SK-N-SH (cell line): ENCODE measurements at regions of chr16 and their contacts with region 1.

Region 1: GRCh38 chr16:2500918-2501750 is 12.6 kb upstream of the ATP6V0C start:
- DNase-seq: peak; percentile 95
- H3K4me3 ChIP-seq: peak overlapping the region; percentile 27 to 34; a peak in 2 of 4 replicates
- H3K27ac ChIP-seq: peak overlapping the region in 1 of 2 experiments; percentile 50; a peak in 1 of 4 replicates
- H3K4me1 ChIP-seq: peaks cover 0 to 27% of the 10 kb centered on the region in 2 experiments; a peak in 1 of 4 replicates
- H3K27me3 ChIP-seq: no peaks in the 10 kb centered on the region
- CTCF ChIP-seq: peak; percentile 96
- EP300 ChIP-seq: no peak
- RAD21 ChIP-seq: peak; percentile 96

Region 2: GRCh38 chr16:2317231-2318020 is 183.7 kb before region 1 on chr16:
- CTCF ChIA-PET with region 1: no interaction called
- POLR2A ChIA-PET with region 1: no interaction called
- DNase-seq: no peak
- H3K4me3 ChIP-seq: no peak overlapping the region
- H3K27ac ChIP-seq: no peak overlapping the region
- H3K4me1 ChIP-seq: no peaks in the 10 kb centered on the region; a peak in 1 of 4 replicates
- H3K27me3 ChIP-seq: no peaks in the 10 kb centered on the region
- CTCF ChIP-seq: no peak
- EP300 ChIP-seq: no peak
- RAD21 ChIP-seq: no peak

Region 3: GRCh38 chr16:2340564-2341455 is 160.3 kb before region 1 on chr16 and contains the start of gene ABCA3:
- CTCF ChIA-PET with region 1: interaction called, 18 read pairs
- POLR2A ChIA-PET with region 1: no interaction called
- DNase-seq: peak; percentile 100
- H3K4me3 ChIP-seq: peak within 1 kb of the TSS; percentile 76 to 82
- H3K27ac ChIP-seq: peak within 1 kb of the TSS in 1 of 2 experiments; percentile 80; a peak in 2 of 4 replicates
- H3K4me1 ChIP-seq: peaks cover 0 to 20% of the 10 kb centered on the region in 2 experiments; a peak in 2 of 4 replicates
- H3K27me3 ChIP-seq: no peaks in the 10 kb centered on the region
- CTCF ChIP-seq: peak; percentile 96
- EP300 ChIP-seq: no peak
- RAD21 ChIP-seq: peak; percentile 81
- polyA plus RNA-seq, gene ABCA3: 6.9 and 9.9 TPM in 2 replicates

Region 4: GRCh38 chr16:2459647-2460390 is 41.3 kb before region 1 on chr16 and contains the start of gene TEDC2:
- CTCF ChIA-PET with region 1: interaction called, 27 read pairs
- POLR2A ChIA-PET with region 1: interaction called, 4 read pairs
- DNase-seq: peak; percentile 99
- H3K4me3 ChIP-seq: peak within 1 kb of the TSS; percentile 66 to 71
- H3K27ac ChIP-seq: peak within 1 kb of the TSS; percentile 39 to 76; a peak in 3 of 4 replicates
- H3K4me1 ChIP-seq: peaks cover 9 to 24% of the 10 kb centered on the region in 2 experiments; a peak in 2 of 4 replicates
- H3K27me3 ChIP-seq: no peaks in the 10 kb centered on the region
- CTCF ChIP-seq: no peak
- EP300 ChIP-seq: no peak
- RAD21 ChIP-seq: no peak
- polyA plus RNA-seq, gene TEDC2: 15.6 and 16.5 TPM in 2 replicates

Region 5: GRCh38 chr16:2474877-2475412 is 26.2 kb before region 1 on chr16 and contains the start of gene TBC1D24:
- CTCF ChIA-PET with region 1: interaction called, 32 read pairs
- POLR2A ChIA-PET with region 1: interaction called, 19 read pairs
- DNase-seq: peak; percentile 100
- H3K4me3 ChIP-seq: peak within 1 kb of the TSS; percentile 79 to 89
- H3K27ac ChIP-seq: peak within 1 kb of the TSS; percentile 38 to 89; a peak in 3 of 4 replicates
- H3K4me1 ChIP-seq: peaks cover 0 to 55% of the 10 kb centered on the region in 2 experiments; a peak in 3 of 4 replicates
- H3K27me3 ChIP-seq: no peaks in the 10 kb centered on the region
- CTCF ChIP-seq: no peak
- EP300 ChIP-seq: no peak
- RAD21 ChIP-seq: no peak
- polyA plus RNA-seq, gene TBC1D24: 5.6 and 6.7 TPM in 2 replicates

Region 6: DNA sequence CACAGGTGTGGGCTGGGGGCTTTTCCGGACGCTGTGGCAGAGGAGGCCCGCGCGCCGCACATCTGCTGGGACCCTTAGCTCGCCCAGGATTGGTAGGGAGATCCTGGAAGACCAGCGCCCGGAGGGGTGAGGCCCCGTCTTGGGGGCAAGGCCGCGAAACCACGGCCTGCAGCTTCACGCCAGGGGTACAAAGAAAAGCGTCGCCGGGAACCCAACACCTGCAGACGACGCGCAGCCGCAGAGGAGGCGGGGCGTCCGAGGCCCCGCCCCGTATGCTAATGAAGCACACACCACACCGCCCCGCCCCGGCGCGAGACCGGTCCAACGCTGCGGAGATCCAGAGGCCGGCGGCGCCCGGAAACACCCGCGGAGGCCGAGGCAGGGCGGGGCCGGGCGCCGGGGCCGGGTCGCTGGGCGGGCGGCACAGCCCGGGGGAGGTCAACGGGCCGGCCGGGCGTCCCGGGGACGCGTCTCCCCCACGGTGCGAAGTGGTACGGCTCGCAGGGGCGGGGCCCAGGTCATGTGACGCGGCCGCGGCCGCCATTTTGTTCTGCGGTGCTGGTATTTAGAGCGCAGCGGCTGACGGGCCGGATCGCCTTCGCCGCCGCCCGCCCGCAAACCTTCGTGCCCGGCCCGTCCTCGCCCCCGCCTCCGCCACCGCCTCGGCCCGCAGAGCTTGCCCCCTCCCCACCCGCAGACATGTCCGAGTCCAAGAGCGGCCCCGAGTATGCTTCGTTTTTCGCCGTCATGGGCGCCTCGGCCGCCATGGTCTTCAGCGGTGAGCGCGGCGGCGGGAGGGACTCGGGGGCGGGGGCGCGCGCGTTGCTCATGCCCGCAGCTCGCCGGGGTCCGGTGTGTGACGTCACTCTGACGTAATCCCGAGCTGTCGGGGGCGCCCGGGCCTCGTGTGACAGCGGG is 12.5 kb after region 1 on chr16 and contains the start of gene ATP6V0C:
- CTCF ChIA-PET with region 1: interaction called, 41 read pairs
- POLR2A ChIA-PET with region 1: no interaction called
- DNase-seq: peak; percentile 97
- H3K4me3 ChIP-seq: peak within 1 kb of the TSS; percentile 74 to 95
- H3K27ac ChIP-seq: peak within 1 kb of the TSS; percentile 73 to 90
- H3K4me1 ChIP-seq: peaks cover 15 to 25% of the 10 kb centered on the region in 2 experiments; a peak in 3 of 4 replicates
- H3K27me3 ChIP-seq: no peaks in the 10 kb centered on the region
- CTCF ChIP-seq: no peak
- EP300 ChIP-seq: no peak
- RAD21 ChIP-seq: no peak
- polyA plus RNA-seq, gene ATP6V0C: 30.2 and 80.1 TPM in 2 replicates

Region 7: DNA sequence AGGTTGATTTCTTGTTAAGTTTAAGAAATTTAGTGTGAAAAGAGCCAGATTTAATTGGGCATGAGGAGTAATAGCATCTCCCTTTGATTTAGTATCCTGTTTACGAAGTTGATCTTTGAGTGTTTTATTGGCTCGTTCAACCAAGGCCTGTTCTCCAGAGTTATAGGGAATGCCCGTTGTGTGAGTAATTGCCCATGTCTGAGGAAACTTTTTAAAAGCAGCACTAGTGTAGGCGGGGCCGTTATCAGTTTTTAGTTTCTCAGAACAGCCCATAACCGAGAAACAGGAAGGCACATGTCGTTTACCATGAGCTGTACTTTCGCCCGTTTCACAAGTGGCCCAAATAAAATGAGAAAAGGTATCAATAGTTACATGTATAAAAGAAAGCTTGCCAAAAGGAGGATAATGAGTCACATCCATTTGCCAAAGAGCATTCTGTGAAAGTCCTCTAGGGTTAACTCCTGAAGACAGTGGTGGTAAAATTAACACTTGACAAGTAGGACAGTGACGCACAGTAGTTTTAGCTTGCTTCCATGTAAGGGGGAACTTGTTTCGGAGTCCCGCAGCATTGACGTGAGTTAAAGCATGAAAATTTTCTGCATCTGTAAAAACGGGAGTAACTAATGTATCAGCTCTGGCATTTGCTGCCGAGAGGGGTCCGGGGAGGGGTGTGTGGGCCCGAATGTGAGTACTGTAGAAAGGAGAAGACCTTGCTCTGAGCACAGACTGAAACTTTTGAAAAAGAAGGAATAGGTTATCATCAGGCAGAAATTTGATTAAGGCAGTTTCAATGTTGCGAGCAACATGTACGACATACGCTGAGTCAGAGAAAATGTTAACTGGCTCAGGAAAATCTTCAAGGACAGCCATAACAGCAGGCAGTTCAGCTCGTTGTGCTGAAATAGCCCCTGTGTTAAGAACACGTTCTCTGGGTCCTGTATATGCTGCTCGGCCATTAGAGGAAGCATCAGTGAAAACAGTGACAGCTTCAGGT is 162.7 kb after region 1 on chr16:
- CTCF ChIA-PET with region 1: no interaction called
- POLR2A ChIA-PET with region 1: no interaction called
- DNase-seq: no peak
- H3K4me3 ChIP-seq: no peak overlapping the region
- H3K27ac ChIP-seq: peak overlapping the region in 1 of 2 experiments; percentile 7; a peak in 1 of 4 replicates
- H3K4me1 ChIP-seq: no peaks in the 10 kb centered on the region
- H3K27me3 ChIP-seq: no peaks in the 10 kb centered on the region
- CTCF ChIP-seq: no peak
- EP300 ChIP-seq: no peak
- RAD21 ChIP-seq: no peak